ENCODE measurements at regions of chr1 and their contacts with region 1.

Region 1: GRCh38 chr1:178684542-178685000 is 40.5 kb upstream of the RALGPS2 start:
- DNase-seq: peak; percentile 90
- ATAC-seq: peak; percentile 88
- H3K4me3 ChIP-seq: no peak overlapping the region
- H3K27ac ChIP-seq: peak overlapping the region; percentile 74
- H3K4me1 ChIP-seq: peaks cover 47% of the 10 kb centered on the region
- H3K27me3 ChIP-seq: no peaks in the 10 kb centered on the region
- CTCF ChIP-seq: no peak

Region 2: GRCh38 chr1:178607718-178608408 is 76.7 kb before region 1 on chr1:
- CTCF ChIA-PET with region 1: no interaction called
- POLR2A ChIA-PET with region 1: interaction called, 7 read pairs
- intact Hi-C with region 1: loop called (anchors 2 kb)
- DNase-seq: no peak
- ATAC-seq: no peak
- H3K4me3 ChIP-seq: no peak overlapping the region
- H3K27ac ChIP-seq: peak overlapping the region; percentile 97
- H3K4me1 ChIP-seq: peaks cover 52% of the 10 kb centered on the region
- H3K27me3 ChIP-seq: no peaks in the 10 kb centered on the region
- CTCF ChIP-seq: no peak

Region 3: DNA sequence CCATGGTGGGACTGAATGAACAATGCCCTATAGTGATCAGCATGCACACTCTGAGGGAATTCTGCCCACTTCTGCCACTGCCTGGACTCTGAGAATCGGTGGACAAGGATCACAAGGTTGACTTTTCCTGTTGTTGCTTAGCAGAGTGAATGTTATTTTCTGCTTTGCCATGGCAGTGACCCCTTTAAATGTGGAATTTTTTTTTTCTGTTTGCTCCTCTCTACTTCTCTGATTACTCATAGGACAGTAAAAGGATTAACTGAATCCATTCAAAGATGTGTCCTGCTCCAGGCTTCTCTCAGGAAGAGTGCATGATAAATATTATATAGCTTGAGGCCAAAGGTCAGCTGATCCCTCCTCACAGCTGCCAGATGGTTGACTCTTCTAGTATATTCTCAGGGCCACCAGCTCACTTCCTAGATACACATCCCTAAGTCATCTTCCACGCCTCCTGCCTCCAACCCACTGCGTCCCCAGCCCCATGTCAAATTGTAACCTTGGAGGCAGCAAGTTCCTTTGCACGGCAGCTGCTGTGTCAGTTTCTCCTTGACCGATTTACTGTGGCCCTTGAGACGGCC is 33.5 kb before region 1 on chr1:
- CTCF ChIA-PET with region 1: no interaction called
- POLR2A ChIA-PET with region 1: interaction called, 3 read pairs
- intact Hi-C with region 1: loop called (anchors 1 kb)
- DNase-seq: peak; percentile 85
- ATAC-seq: peak; percentile 70
- H3K4me3 ChIP-seq: no peak overlapping the region
- H3K27ac ChIP-seq: peak overlapping the region; percentile 95
- H3K4me1 ChIP-seq: peaks cover 57% of the 10 kb centered on the region
- H3K27me3 ChIP-seq: no peaks in the 10 kb centered on the region
- CTCF ChIP-seq: no peak

Region 4: GRCh38 chr1:178784131-178784536 is 99.6 kb after region 1 on chr1:
- CTCF ChIA-PET with region 1: interaction called, 21 read pairs
- POLR2A ChIA-PET with region 1: no interaction called
- intact Hi-C with region 1: no loop called
- DNase-seq: no peak
- ATAC-seq: no peak
- H3K4me3 ChIP-seq: no peak overlapping the region
- H3K27ac ChIP-seq: no peak overlapping the region
- H3K4me1 ChIP-seq: peaks cover 5% of the 10 kb centered on the region; the same call in 1 of the 2 replicates
- H3K27me3 ChIP-seq: no peaks in the 10 kb centered on the region
- CTCF ChIP-seq: no peak

Measured in PC-3 (cell line).